Colonic mucosa (tissue), 4 donors: ENCODE measurements at regions of chr2 and their contacts with region 1.

Region 1: GRCh38 chr2:19955544-19956422 is 34.1 kb downstream of the WDR35 start:
- DNase-seq: peak; percentile 64
- H3K4me3 ChIP-seq: no peak overlapping the region
- H3K27ac ChIP-seq: no peak overlapping the region
- H3K4me1 ChIP-seq: no peaks in the 10 kb centered on the region
- H3K27me3 ChIP-seq: no peaks in the 10 kb centered on the region
- CTCF ChIP-seq: peak; percentile 74

Region 2: GRCh38 chr2:20001361-20001863 is 45.6 kb after region 1 on chr2:
- intact Hi-C with region 1: no loop called
- DNase-seq: no peak
- H3K4me3 ChIP-seq: no peak overlapping the region
- H3K27ac ChIP-seq: no peak overlapping the region
- H3K4me1 ChIP-seq: no peaks in the 10 kb centered on the region
- H3K27me3 ChIP-seq: no peaks in the 10 kb centered on the region
- CTCF ChIP-seq: no peak

Region 3: DNA sequence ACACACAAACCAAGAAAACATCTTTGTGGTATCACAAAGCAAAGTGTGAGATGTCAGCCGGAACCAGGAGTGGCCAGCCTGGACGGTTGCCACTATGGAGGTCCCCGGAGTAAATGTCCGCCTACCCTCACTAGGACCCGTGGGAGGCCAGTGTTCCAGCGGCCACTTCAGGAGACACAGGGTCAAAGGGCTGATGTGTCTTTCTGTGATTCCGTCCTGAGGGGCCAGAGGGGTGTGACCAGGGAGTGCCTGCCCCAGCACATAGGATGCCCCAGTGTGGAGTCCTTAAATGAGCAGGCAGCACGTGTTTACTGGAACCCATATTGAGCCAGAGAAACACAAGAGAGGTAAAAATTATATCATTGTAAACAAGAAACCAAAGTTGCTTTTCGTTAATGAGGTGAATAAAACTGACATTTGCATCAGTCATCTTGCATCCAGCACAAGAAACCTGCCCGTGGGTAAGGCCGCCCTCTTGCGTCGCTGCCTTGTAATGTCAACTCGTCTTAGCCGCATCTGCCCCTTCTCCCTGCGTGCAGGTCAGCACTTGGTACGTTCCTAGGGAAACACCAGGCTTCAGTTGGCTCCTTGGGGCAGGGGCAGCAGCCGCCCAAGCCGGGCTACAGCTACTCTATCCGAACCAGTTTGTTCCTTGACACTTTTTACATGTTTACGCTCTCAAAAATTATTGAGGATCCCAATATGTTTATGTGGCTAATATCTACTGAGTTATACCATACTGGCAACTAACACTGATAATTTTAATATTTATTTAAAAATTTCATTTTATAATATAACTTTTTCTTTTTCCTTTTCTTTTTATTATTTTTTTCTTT is 142.3 kb after region 1 on chr2:
- intact Hi-C with region 1: loop called (anchors 2 kb)
- DNase-seq: peak; percentile 86
- H3K4me3 ChIP-seq: no peak overlapping the region
- H3K27ac ChIP-seq: no peak overlapping the region
- H3K4me1 ChIP-seq: no peaks in the 10 kb centered on the region
- H3K27me3 ChIP-seq: no peaks in the 10 kb centered on the region
- CTCF ChIP-seq: peak; percentile 81